CD8-positive, alpha-beta T cell (primary cell): ENCODE measurements at regions of chr17 and their contacts with region 1.

Region 1: GRCh38 chr17:14771543-14771942 is 470.7 kb downstream of the HS3ST3B1 start:
- DNase-seq: no peak
- ATAC-seq: no peak
- H3K4me3 ChIP-seq: no peak overlapping the region
- H3K4me3 Mint-ChIP-seq: no peak overlapping the region
- H3K27ac ChIP-seq: no peak overlapping the region
- H3K27ac Mint-ChIP-seq: no peak overlapping the region
- H3K4me1 ChIP-seq: no peaks in the 10 kb centered on the region
- H3K4me1 Mint-ChIP-seq: no peaks in the 10 kb centered on the region
- H3K27me3 ChIP-seq: no peaks in the 10 kb centered on the region
- H3K27me3 Mint-ChIP-seq: peaks cover 4% of the 10 kb centered on the region
- CTCF ChIP-seq: no peak

Region 2: DNA sequence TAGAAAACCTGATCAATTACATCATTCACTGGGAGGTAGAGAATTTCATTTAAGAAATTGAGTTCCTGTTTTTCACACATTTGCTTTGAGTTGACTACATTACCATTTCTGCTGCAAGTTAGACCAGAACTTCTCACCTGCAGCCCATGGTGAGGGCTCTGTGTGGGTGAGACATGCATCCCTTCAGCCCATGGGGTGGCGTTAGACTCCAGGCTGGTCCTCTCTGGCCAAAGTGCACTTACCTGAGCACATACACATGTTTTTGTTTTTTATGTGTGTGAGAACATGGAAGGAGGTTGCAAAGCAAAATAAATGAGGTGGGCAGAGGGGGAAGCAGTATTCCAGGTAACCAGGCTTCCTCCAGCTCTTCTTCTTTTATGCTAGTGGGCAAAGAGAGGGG is 23.4 kb after region 1 on chr17:
- CTCF ChIA-PET with region 1: no interaction called
- POLR2A ChIA-PET with region 1: no interaction called
- intact Hi-C with region 1: loop called in 1 of 2 experiments (anchors 1 kb)
- DNase-seq: no peak
- ATAC-seq: no peak
- H3K4me3 ChIP-seq: no peak overlapping the region
- H3K4me3 Mint-ChIP-seq: no peak overlapping the region
- H3K27ac ChIP-seq: no peak overlapping the region
- H3K27ac Mint-ChIP-seq: no peak overlapping the region
- H3K4me1 ChIP-seq: no peaks in the 10 kb centered on the region
- H3K4me1 Mint-ChIP-seq: no peaks in the 10 kb centered on the region
- H3K27me3 ChIP-seq: no peaks in the 10 kb centered on the region
- H3K27me3 Mint-ChIP-seq: peaks cover 26% of the 10 kb centered on the region
- CTCF ChIP-seq: no peak